ENCODE measurements at regions of chr3 and their contacts with region 1.

Region 1: GRCh38 chr3:178606129-178606528 is 69.9 kb downstream of the KCNMB2 start:
- DNase-seq: no peak
- ATAC-seq: no peak

Region 2: DNA sequence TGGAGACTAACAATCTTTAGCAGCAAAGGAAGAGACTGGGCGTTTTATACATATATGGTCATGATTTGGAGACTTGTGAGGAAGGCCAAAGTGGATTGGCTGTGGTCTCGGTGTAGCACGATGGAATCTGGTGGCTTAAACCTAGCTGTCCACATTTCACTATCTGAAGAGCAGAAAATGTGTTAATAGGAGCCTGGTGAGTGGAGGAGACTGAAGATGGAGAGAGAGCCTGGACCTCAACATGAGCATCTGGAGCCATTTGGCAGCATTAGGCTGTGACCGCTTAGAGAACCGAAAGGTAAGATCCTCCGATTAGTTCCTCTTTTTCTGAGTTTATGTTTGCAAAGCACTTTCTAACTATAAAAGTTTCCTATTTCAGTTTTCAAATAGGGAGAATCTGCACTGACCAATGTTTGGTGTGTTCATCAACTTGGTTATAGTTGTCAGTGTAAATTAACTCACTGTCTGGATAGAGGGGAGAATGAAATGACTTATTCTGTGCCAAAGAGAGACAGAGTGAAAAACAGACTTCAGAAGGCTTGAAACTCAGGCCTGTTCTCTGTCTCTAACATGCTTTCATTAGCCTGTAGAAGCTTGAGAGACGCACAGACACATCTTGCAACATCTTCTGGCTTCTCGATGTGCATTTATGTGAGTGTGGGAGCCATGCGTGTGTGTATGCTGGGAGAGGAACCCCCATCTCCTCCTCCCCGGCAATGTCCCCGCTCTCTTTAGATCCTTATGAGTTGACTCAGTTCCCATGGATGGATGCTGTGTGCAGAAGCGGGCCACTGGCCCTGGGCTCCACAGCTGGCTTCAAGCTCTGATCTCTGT is 1164.1 kb before region 1 on chr3:
- intact Hi-C with region 1: loop called (anchors 5 kb)
- DNase-seq: no peak
- ATAC-seq: peak; percentile 64

Region 3: GRCh38 chr3:178475062-178475461 is 131.1 kb before region 1 on chr3:
- intact Hi-C with region 1: no loop called
- DNase-seq: no peak
- ATAC-seq: no peak